ENCODE measurements at regions of chr1 and their contacts with region 1.

Region 1: GRCh38 chr1:108125312-108126138 is 74.6 kb downstream of the SLC25A24 start:
- DNase-seq: peak; percentile 51
- H3K4me3 ChIP-seq: no peak overlapping the region
- H3K27ac ChIP-seq: no peak overlapping the region
- H3K4me1 ChIP-seq: no peaks in the 10 kb centered on the region
- H3K27me3 ChIP-seq: no peaks in the 10 kb centered on the region
- CTCF ChIP-seq: peak; percentile 87 to 97

Region 2: DNA sequence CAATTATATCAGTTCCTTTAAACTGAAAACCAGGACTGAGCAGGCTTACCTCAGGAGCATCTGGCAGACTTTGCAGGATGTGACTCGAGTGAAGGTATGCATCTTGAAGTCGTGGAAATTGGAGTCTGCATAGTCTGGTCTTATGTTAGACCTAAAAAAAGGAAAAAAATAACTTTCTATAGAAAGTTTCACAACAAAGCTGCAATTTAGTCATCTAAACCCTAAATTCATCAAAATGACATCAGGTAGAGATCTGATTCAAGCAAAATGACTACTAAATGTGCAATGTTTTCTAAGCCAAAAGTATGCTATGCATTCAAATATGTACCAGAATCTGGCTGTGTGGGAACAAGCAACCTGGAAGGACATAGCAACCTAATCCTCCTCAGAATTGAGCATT is 420.6 kb before region 1 on chr1:
- CTCF ChIA-PET with region 1: no interaction called
- dilution Hi-C with region 1: no loop called
- in situ Hi-C with region 1: no loop called
- intact Hi-C with region 1: no loop called
- DNase-seq: peak; percentile 62
- H3K4me3 ChIP-seq: no peak overlapping the region
- H3K27ac ChIP-seq: peak overlapping the region; percentile 48
- H3K4me1 ChIP-seq: peaks cover 18% of the 10 kb centered on the region
- H3K27me3 ChIP-seq: no peaks in the 10 kb centered on the region
- CTCF ChIP-seq: no peak

Region 3: GRCh38 chr1:107776900-107777663 is 348.4 kb before region 1 on chr1:
- CTCF ChIA-PET with region 1: interaction called, 10 read pairs
- dilution Hi-C with region 1: no loop called
- in situ Hi-C with region 1: loop called in 1 of 2 experiments (anchors 5 kb)
- intact Hi-C with region 1: loop called (anchors 1 kb)
- DNase-seq: no peak
- H3K4me3 ChIP-seq: no peak overlapping the region
- H3K27ac ChIP-seq: no peak overlapping the region
- H3K4me1 ChIP-seq: no peaks in the 10 kb centered on the region
- H3K27me3 ChIP-seq: no peaks in the 10 kb centered on the region
- CTCF ChIP-seq: no peak

Region 4: GRCh38 chr1:107897438-107898345 is 227.8 kb before region 1 on chr1:
- CTCF ChIA-PET with region 1: no interaction called
- dilution Hi-C with region 1: no loop called
- in situ Hi-C with region 1: no loop called
- intact Hi-C with region 1: loop called (anchors 1 kb)
- DNase-seq: no peak
- H3K4me3 ChIP-seq: no peak overlapping the region
- H3K27ac ChIP-seq: no peak overlapping the region
- H3K4me1 ChIP-seq: peaks cover 6% of the 10 kb centered on the region
- H3K27me3 ChIP-seq: no peaks in the 10 kb centered on the region
- CTCF ChIP-seq: peak in 1 of 2 donors; percentile 15

Region 5: GRCh38 chr1:107936498-107937481 is 188.7 kb before region 1 on chr1:
- CTCF ChIA-PET with region 1: no interaction called
- dilution Hi-C with region 1: no loop called
- in situ Hi-C with region 1: no loop called
- intact Hi-C with region 1: loop called (anchors 10 kb)
- DNase-seq: peak; percentile 97
- H3K4me3 ChIP-seq: no peak overlapping the region
- H3K27ac ChIP-seq: peak overlapping the region; percentile 36
- H3K4me1 ChIP-seq: peaks cover 17% of the 10 kb centered on the region
- H3K27me3 ChIP-seq: no peaks in the 10 kb centered on the region
- CTCF ChIP-seq: no peak

Region 6: GRCh38 chr1:107963601-107964335 is 161.8 kb before region 1 on chr1:
- CTCF ChIA-PET with region 1: no interaction called
- dilution Hi-C with region 1: no loop called
- in situ Hi-C with region 1: loop called in 1 of 2 experiments (anchors 10 kb)
- intact Hi-C with region 1: loop called (anchors 1 kb)
- DNase-seq: peak; percentile 21
- H3K4me3 ChIP-seq: peak overlapping the region; percentile 13 to 59 (median 56)
- H3K27ac ChIP-seq: no peak overlapping the region
- H3K4me1 ChIP-seq: peaks cover 26% of the 10 kb centered on the region
- H3K27me3 ChIP-seq: no peaks in the 10 kb centered on the region
- CTCF ChIP-seq: no peak

Region 7: GRCh38 chr1:108208724-108209429 is 83.4 kb after region 1 on chr1:
- CTCF ChIA-PET with region 1: no interaction called
- dilution Hi-C with region 1: no loop called
- in situ Hi-C with region 1: no loop called
- intact Hi-C with region 1: no loop called
- DNase-seq: no peak
- H3K4me3 ChIP-seq: no peak overlapping the region
- H3K27ac ChIP-seq: no peak overlapping the region
- H3K4me1 ChIP-seq: no peaks in the 10 kb centered on the region
- H3K27me3 ChIP-seq: no peaks in the 10 kb centered on the region
- CTCF ChIP-seq: no peak